Endothelial cell of umbilical vein (primary cell): ENCODE measurements at regions of chr1 and their contacts with region 1.

Region 1: DNA sequence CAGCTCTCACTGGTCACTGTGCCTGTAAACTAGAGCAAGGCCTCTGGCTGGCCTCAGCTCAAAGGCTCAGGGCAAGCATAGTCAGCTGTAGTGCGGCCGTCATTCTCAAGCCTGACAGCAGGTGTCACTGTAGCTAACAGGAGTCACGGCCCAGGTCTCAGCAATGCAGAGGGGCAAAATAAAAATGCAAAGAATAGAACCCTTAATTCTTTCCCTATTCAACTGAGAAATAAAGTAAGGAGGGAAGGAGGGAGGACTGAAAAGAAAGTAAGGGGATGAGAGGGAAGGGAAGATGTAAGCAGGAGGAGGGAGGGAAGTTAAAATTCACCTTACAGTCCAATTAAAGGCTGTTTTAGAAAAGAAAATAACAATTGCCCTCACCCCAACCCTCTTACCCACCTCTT is 106.1 kb downstream of the KIAA0319L start:
- DNase-seq: peak; percentile 79
- H3K4me3 ChIP-seq: no peak overlapping the region
- H3K27ac ChIP-seq: no peak overlapping the region
- H3K4me1 ChIP-seq: peaks cover 19% of the 10 kb centered on the region
- H3K27me3 ChIP-seq: no peaks in the 10 kb centered on the region
- CTCF ChIP-seq: peak; percentile 87 to 89
- POLR2A ChIP-seq: no peak

Region 2: DNA sequence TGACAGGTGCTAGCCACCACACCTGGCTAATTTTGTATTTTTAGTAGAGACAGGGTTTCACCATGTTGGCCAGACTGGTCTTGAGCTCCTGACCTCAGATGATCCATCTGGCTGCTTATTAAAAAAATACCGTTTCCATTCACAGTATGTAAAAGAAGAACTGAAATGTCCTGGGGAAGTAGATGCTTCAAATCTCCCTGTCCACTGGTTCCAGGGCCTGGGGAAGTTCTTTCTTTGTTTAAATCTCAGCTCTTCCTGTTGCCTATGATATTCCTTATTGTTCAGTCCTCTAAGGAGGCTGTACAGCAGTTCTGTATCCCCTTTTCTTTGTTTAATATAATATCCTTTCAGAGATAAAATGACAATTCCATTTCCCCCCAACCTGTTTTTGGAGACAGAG is 324.6 kb before region 1 on chr1:
- CTCF ChIA-PET with region 1: no interaction called
- POLR2A ChIA-PET with region 1: no interaction called
- dilution Hi-C with region 1: no loop called
- intact Hi-C with region 1: no loop called
- DNase-seq: no peak
- H3K4me3 ChIP-seq: no peak overlapping the region
- H3K27ac ChIP-seq: no peak overlapping the region
- H3K4me1 ChIP-seq: peaks cover 3% of the 10 kb centered on the region
- H3K27me3 ChIP-seq: no peaks in the 10 kb centered on the region
- CTCF ChIP-seq: no peak
- POLR2A ChIP-seq: no peak

Region 3: GRCh38 chr1:35426097-35426586 is 25.0 kb before region 1 on chr1:
- CTCF ChIA-PET with region 1: no interaction called
- POLR2A ChIA-PET with region 1: no interaction called
- dilution Hi-C with region 1: no loop called
- intact Hi-C with region 1: no loop called
- DNase-seq: peak; percentile 60
- H3K4me3 ChIP-seq: no peak overlapping the region
- H3K27ac ChIP-seq: no peak overlapping the region
- H3K4me1 ChIP-seq: peaks cover 9% of the 10 kb centered on the region
- H3K27me3 ChIP-seq: no peaks in the 10 kb centered on the region
- CTCF ChIP-seq: no peak
- POLR2A ChIP-seq: no peak

Region 4: GRCh38 chr1:35486858-35487408 is 35.8 kb after region 1 on chr1:
- CTCF ChIA-PET with region 1: interaction called, 10 read pairs
- POLR2A ChIA-PET with region 1: no interaction called
- dilution Hi-C with region 1: no loop called
- intact Hi-C with region 1: no loop called
- DNase-seq: no peak
- H3K4me3 ChIP-seq: no peak overlapping the region
- H3K27ac ChIP-seq: no peak overlapping the region
- H3K4me1 ChIP-seq: no peaks in the 10 kb centered on the region
- H3K27me3 ChIP-seq: no peaks in the 10 kb centered on the region
- CTCF ChIP-seq: no peak
- POLR2A ChIP-seq: no peak

Region 5: GRCh38 chr1:35544978-35545377 is 93.9 kb after region 1 on chr1:
- CTCF ChIA-PET with region 1: interaction called, 12 read pairs
- POLR2A ChIA-PET with region 1: no interaction called
- dilution Hi-C with region 1: no loop called
- intact Hi-C with region 1: no loop called
- DNase-seq: no peak
- H3K4me3 ChIP-seq: no peak overlapping the region
- H3K27ac ChIP-seq: no peak overlapping the region
- H3K4me1 ChIP-seq: no peaks in the 10 kb centered on the region
- H3K27me3 ChIP-seq: no peaks in the 10 kb centered on the region
- CTCF ChIP-seq: no peak
- POLR2A ChIP-seq: no peak

Region 6: GRCh38 chr1:35564037-35564883 is 113.1 kb after region 1 on chr1:
- CTCF ChIA-PET with region 1: interaction called, 363 read pairs
- POLR2A ChIA-PET with region 1: no interaction called
- dilution Hi-C with region 1: no loop called
- intact Hi-C with region 1: loop called (anchors 1 kb)
- DNase-seq: peak; percentile 70
- H3K4me3 ChIP-seq: no peak overlapping the region
- H3K27ac ChIP-seq: no peak overlapping the region
- H3K4me1 ChIP-seq: no peaks in the 10 kb centered on the region
- H3K27me3 ChIP-seq: no peaks in the 10 kb centered on the region
- CTCF ChIP-seq: peak; percentile 72 to 84
- POLR2A ChIP-seq: no peak

Region 7: DNA sequence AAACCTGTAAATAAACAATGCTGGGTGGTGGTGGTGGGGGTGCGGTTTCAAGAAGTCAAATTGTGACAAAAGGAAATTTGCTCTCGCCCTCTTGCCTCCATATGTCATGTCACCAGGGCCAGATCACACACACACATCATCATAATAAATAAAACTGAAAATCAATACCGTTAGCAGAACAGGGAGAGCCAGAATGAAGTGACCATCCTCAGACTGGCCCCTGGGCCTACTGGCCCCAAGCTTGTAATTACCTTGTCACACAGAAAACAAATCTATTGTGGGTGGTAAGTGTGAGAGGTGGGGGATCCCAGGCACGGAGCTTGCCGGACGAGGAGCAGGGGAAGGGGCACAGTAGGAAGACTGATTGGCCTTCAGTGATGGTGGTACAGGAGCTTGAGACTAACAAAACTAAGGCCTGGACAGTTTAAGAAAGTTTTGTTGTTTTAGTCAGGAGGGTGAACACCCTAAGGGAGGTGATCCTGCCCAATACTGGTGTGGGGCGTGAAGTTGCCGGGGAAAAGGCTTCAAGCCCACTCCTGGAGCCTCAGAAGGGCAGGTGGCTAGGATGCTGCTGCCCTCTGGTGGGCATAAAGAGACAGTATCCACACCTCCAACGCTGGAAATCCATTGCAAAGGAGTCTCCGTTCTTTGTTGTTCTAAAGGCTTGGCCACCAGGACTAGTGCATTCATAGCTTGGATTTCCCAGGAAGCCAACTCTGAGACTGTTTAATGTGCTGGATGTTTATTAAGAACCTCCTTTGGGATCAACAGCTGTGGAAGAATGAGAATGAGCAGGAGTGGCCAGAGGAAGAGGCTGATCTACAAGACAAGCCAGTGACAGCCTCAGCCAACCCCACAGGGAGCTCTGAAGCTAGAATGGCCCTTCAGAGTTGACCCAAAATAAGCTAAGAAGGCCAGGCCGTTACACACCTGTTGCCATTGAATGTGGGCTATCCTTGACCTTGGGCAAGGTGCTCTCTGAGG is 275.6 kb after region 1 on chr1:
- CTCF ChIA-PET with region 1: interaction called, 48 read pairs
- POLR2A ChIA-PET with region 1: no interaction called
- dilution Hi-C with region 1: no loop called
- intact Hi-C with region 1: no loop called
- DNase-seq: peak; percentile 66
- H3K4me3 ChIP-seq: no peak overlapping the region
- H3K27ac ChIP-seq: no peak overlapping the region
- H3K4me1 ChIP-seq: no peaks in the 10 kb centered on the region
- H3K27me3 ChIP-seq: no peaks in the 10 kb centered on the region
- CTCF ChIP-seq: peak; percentile 76 to 90
- POLR2A ChIP-seq: no peak

Region 8: GRCh38 chr1:35777109-35777508 is 326.0 kb after region 1 on chr1:
- CTCF ChIA-PET with region 1: interaction called, 38 read pairs
- POLR2A ChIA-PET with region 1: no interaction called
- dilution Hi-C with region 1: no loop called
- intact Hi-C with region 1: loop called (anchors 1 kb)
- DNase-seq: no peak
- H3K4me3 ChIP-seq: no peak overlapping the region
- H3K27ac ChIP-seq: no peak overlapping the region
- H3K4me1 ChIP-seq: no peaks in the 10 kb centered on the region
- H3K27me3 ChIP-seq: no peaks in the 10 kb centered on the region
- CTCF ChIP-seq: no peak
- POLR2A ChIP-seq: no peak